GM12878 (cell line): ENCODE measurements at regions of chr6 and their contacts with region 1.

Region 1: GRCh38 chr6:42790549-42791181 is 8.8 kb downstream of the BICRAL start:
- DNase-seq: no peak
- ATAC-seq: peak; percentile 35
- H3K4me3 ChIP-seq: no peak overlapping the region
- H3K27ac ChIP-seq: peak overlapping the region; percentile 9
- H3K4me1 ChIP-seq: peaks cover 27% of the 10 kb centered on the region
- H3K27me3 ChIP-seq: no peaks in the 10 kb centered on the region
- CTCF ChIP-seq: no peak; a peak in 1 of 6 replicates
- EP300 ChIP-seq: no peak
- POLR2A ChIP-seq: no peak
- RAD21 ChIP-seq: no peak

Region 2: DNA sequence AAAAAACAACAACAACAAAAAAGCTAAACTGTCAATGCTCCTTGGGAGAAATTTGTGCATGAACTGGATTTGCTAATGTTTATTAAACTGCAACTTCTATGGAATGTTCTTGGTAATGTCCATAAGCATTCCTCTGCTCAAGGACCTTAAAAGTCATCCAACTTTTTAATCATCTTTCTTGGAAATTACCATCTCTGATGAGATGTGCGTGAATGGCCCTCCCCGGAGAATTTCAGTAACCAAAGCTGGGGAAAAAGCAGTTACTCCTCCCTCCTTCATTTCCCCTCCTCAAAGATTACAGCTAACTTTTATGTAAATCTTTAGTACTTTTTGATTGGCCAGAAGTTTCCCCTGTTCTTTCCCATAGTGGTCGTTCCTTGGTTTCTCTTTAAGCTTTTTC is 49.9 kb before region 1 on chr6:
- CTCF ChIA-PET with region 1: no interaction called
- POLR2A ChIA-PET with region 1: interaction called, 43 read pairs
- RAD21 ChIA-PET with region 1: interaction called, 8 read pairs
- SMC1A ChIA-PET with region 1: interaction called, 3 read pairs
- in situ Hi-C with region 1: no loop called
- intact Hi-C with region 1: no loop called
- DNase-seq: no peak
- ATAC-seq: no peak
- H3K4me3 ChIP-seq: no peak overlapping the region
- H3K27ac ChIP-seq: no peak overlapping the region
- H3K4me1 ChIP-seq: no peaks in the 10 kb centered on the region
- H3K27me3 ChIP-seq: no peaks in the 10 kb centered on the region
- CTCF ChIP-seq: no peak
- EP300 ChIP-seq: no peak
- POLR2A ChIP-seq: no peak
- RAD21 ChIP-seq: no peak

Region 3: GRCh38 chr6:42860481-42860880 is 69.8 kb after region 1 on chr6:
- CTCF ChIA-PET with region 1: no interaction called
- POLR2A ChIA-PET with region 1: interaction called, 12 read pairs
- RAD21 ChIA-PET with region 1: no interaction called
- SMC1A ChIA-PET with region 1: no interaction called
- in situ Hi-C with region 1: no loop called
- intact Hi-C with region 1: no loop called
- DNase-seq: no peak
- ATAC-seq: no peak
- H3K4me3 ChIP-seq: no peak overlapping the region
- H3K27ac ChIP-seq: no peak overlapping the region
- H3K4me1 ChIP-seq: no peaks in the 10 kb centered on the region
- H3K27me3 ChIP-seq: no peaks in the 10 kb centered on the region
- CTCF ChIP-seq: no peak
- EP300 ChIP-seq: no peak
- POLR2A ChIP-seq: no peak
- RAD21 ChIP-seq: no peak